Activated naive CD4-positive, alpha-beta T cell treated with anti-CD3 and anti-CD28 coated beads for 36 hours (primary cell): ENCODE measurements at regions of chr15 and their contacts with region 1.

Region 1: DNA sequence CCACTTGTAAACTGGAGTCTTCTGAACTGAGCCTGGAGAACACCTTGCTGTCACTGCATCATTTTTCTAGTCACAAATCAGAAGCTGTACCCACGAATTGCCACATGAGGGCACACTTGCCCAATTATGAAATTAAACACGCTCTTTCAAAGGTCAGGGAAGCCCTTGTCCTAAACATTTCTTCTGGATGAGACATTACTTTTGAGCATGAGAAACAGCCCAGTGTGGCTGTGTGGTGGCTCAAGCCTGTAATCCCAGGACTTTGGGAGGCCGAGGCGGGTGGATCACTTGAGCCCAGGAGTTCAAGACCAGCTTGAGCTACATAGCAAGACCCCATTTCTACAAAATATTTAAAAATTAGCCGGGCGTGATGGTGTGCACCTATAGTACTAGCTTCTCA is 27.5 kb upstream of the CFAP161 start:
- DNase-seq: peak; percentile 55
- H3K4me3 Mint-ChIP-seq: no peak overlapping the region
- H3K27ac Mint-ChIP-seq: no peak overlapping the region
- H3K4me1 Mint-ChIP-seq: peaks cover 1% of the 10 kb centered on the region
- H3K27me3 Mint-ChIP-seq: peaks cover 8% of the 10 kb centered on the region

Region 2: DNA sequence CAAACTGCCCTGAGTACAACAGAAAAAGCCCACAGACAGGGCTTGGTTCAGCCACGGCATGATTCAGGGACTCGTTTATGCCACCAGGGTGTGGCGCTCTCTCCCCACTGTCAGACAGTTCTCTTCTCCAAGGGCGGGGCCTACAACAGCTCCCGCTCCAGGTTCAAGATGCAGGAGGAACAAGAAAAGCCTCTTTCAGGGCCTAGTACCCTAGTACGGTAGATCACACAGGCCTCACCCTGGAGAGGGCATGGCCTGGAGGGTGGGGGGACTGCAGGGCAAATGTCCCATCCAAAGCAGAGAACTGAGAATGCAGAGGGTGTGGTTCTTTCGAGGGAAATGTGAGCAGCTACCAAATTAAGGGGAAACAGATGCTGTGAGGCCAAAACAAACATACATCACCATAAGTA is 128.9 kb before region 1 on chr15:
- CTCF ChIA-PET with region 1: interaction called, 3 read pairs
- intact Hi-C with region 1: loop called (anchors 2 kb)
- DNase-seq: peak; percentile 69
- H3K4me3 Mint-ChIP-seq: no peak overlapping the region
- H3K27ac Mint-ChIP-seq: peak overlapping the region; percentile 57
- H3K4me1 Mint-ChIP-seq: peaks cover 54% of the 10 kb centered on the region
- H3K27me3 Mint-ChIP-seq: no peaks in the 10 kb centered on the region

Region 3: DNA sequence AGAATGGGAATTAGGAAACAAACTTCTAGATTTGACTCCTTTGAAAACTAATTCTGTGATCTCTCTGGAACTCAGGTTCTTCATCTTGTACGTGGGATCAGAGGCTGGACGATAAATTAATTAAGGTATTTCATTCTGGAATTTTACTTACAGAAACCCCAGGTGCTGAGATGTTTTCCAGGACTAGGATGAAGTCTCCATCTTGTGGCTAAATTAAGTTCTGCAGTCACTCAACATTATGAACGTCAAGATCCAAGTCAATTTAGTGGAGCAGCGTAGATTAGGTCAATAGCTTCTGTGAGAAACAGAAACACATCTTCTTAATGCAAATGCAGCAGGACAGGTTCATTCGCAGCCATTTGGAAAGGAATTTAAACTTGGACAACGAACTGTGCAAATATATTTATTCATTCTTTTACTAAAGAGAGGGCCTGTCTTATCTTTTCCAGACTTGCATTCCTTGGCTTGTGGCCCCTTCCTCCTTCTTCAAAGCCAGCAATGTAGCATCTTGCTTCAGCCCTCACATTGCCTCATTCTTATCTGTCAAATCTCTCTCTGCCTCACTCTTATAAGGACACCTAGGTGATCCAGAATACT is 294.2 kb after region 1 on chr15:
- CTCF ChIA-PET with region 1: interaction called, 5 read pairs
- intact Hi-C with region 1: loop called (anchors 1 kb)
- DNase-seq: no peak
- H3K4me3 Mint-ChIP-seq: no peak overlapping the region
- H3K27ac Mint-ChIP-seq: no peak overlapping the region
- H3K4me1 Mint-ChIP-seq: no peaks in the 10 kb centered on the region
- H3K27me3 Mint-ChIP-seq: no peaks in the 10 kb centered on the region